ENCODE measurements at regions of chr1 and their contacts with region 1.

Region 1: GRCh38 chr1:119662034-119662437 is 14.0 kb upstream of the ZNF697 start:
- DNase-seq: no peak
- H3K4me3 ChIP-seq: no peak overlapping the region
- H3K27ac ChIP-seq: no peak overlapping the region
- H3K4me1 ChIP-seq: no peaks in the 10 kb centered on the region
- H3K27me3 ChIP-seq: no peaks in the 10 kb centered on the region
- CTCF ChIP-seq: no peak
- EP300 ChIP-seq: no peak
- RAD21 ChIP-seq: no peak

Region 2: DNA sequence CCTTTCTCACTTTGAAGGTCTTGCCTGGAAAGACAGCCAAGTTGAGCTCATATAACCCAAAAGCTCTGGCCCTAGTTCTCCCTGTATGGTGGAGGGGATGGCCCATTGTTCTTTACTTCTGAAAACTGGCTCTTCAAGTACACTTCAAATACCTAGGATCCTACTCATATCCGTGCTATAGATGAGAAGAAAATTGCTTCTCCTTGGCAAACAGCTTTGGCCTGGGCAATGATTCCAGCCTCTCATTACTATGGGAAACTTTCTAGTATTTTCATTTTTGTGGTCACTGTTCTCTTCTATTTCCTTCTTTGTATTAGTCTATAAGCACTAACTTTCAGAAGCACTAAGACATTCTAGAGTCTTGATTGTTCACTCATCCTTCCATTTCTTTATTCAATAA is 67.7 kb before region 1 on chr1:
- CTCF ChIA-PET with region 1: no interaction called
- POLR2A ChIA-PET with region 1: no interaction called
- DNase-seq: no peak
- H3K4me3 ChIP-seq: no peak overlapping the region
- H3K27ac ChIP-seq: peak overlapping the region in 1 of 2 experiments; percentile 56; a peak in 2 of 4 replicates
- H3K4me1 ChIP-seq: no peaks in the 10 kb centered on the region
- H3K27me3 ChIP-seq: no peaks in the 10 kb centered on the region
- CTCF ChIP-seq: no peak
- EP300 ChIP-seq: no peak
- RAD21 ChIP-seq: no peak

Region 3: DNA sequence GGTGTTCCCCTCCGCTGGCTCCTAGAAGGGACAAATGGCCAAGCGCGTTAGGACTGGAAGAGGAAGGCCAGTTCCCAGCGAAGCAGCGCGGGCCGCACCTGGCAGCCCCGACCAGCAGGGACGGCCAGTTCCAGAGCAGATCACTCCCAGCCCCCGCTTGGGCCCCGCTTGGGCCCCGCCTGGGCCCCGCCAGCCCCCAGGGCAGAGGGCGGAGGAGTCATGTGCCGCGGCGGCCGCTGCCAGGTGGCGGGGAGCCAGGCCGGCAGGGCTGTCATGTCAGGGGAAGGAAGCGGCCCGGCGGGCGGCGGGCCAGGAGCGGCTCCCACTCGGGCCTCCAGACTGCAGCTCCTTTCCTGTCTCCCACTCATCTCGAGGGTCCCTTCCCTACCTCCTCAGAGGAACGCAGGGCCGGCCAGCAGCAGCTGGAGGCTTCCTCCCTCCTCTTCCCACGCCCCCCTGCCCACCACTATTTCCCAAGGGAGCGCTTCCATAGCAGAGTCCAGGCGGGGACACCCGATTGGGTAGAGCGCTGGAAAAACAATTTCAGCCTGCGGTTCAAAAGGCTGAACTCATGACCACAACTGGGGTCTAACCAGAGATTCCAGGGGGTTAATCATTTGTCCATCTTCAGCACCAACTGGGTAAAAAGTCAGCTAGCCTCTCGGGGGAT is 30.5 kb before region 1 on chr1:
- CTCF ChIA-PET with region 1: interaction called, 12 read pairs
- POLR2A ChIA-PET with region 1: no interaction called
- DNase-seq: peak; percentile 96
- H3K4me3 ChIP-seq: peak overlapping the region in 1 of 2 experiments; percentile 24; a peak in 2 of 4 replicates
- H3K27ac ChIP-seq: peak overlapping the region; percentile 58 to 67
- H3K4me1 ChIP-seq: peaks cover 22 to 28% of the 10 kb centered on the region in 2 experiments
- H3K27me3 ChIP-seq: no peaks in the 10 kb centered on the region
- CTCF ChIP-seq: no peak
- EP300 ChIP-seq: peak; percentile 61 to 78
- RAD21 ChIP-seq: peak; percentile 16; the same call in 1 of the 2 replicates

Measured in SK-N-SH (cell line).